Endothelial cell of umbilical vein (primary cell): ENCODE measurements at regions of chr10 and their contacts with region 1.

Region 1: DNA sequence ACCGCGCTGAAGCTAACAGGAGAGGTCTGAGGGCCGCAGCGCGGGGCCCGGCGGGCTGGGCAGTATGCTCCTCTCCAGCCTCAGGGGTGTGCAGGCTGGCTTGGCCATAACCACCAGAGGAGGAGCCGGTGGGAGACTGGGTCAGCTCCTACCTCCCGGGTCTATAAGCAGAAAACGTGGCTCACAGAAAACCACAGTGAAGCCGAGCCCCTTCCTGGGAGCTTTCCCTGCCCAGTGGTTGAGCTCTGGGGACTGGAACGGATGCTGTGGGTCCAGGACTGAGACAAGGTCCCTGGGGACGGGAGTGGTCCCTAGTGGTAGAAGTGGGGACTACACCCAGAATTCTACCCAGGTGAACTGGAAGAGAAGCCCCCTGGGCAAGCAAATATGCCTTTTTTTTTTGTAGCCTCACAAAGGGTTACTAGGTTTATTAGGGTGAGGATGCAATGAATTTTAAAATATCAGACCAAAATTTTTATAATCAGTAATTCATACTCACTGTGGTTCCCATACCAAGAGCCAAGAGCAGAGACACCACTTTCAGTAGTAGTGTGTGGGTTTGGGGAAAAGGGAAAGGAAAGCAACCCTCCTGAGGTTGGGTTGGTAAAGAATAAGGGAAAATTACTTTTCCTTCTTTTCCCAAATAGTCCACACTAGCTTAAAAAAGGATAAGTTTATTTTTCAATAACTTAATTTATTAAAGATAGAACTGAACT is 67.9 kb upstream of the PRKCQ start:
- DNase-seq: peak; percentile 15
- H3K4me3 ChIP-seq: no peak overlapping the region
- H3K27ac ChIP-seq: no peak overlapping the region
- H3K4me1 ChIP-seq: no peaks in the 10 kb centered on the region
- H3K27me3 ChIP-seq: no peaks in the 10 kb centered on the region
- CTCF ChIP-seq: peak; percentile 48 to 73
- POLR2A ChIP-seq: no peak

Region 2: GRCh38 chr10:6445501-6446316 is 202.3 kb before region 1 on chr10:
- CTCF ChIA-PET with region 1: interaction called, 4 read pairs
- POLR2A ChIA-PET with region 1: no interaction called
- dilution Hi-C with region 1: no loop called
- intact Hi-C with region 1: loop called (anchors 1 kb)
- DNase-seq: peak; percentile 41
- H3K4me3 ChIP-seq: no peak overlapping the region
- H3K27ac ChIP-seq: no peak overlapping the region
- H3K4me1 ChIP-seq: no peaks in the 10 kb centered on the region
- H3K27me3 ChIP-seq: no peaks in the 10 kb centered on the region
- CTCF ChIP-seq: peak; percentile 41 to 47
- POLR2A ChIP-seq: no peak

Region 3: DNA sequence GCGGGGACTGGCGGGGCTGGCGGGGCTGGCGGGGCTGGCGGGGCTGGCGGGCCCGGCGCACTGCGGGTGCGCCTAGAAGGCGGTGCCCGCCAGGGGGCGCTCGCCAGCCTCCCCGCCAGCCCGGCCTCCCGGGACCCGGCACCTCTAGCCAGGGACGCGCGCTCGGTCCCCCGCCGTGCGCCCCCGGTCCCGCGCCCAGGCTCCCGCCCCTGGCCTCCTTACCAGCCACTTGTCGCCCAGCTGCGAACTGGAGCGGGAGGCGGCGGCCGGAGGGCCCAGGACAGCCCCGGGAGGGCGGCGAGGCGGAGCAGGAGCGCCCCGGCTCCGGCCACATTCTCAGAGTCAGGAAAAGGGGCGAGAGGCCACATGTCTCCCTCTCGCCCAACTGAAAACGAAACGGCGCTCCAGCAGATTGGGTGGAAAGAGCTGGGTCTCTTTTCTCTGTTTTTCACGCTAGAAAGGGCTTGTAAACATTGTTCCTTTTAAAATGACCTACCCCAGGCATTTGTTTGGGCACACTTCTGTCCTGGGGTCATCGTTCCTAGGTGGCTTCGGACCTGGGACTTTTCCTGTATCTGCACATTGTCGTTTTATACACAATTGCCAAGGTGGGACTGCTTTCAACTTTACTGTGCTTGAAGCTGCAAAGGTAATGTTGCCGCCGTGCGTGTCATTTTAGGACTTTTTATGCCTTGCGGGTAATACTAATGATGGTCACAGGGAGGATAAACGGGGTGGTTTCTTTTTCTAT is 67.5 kb before region 1 on chr10:
- CTCF ChIA-PET with region 1: interaction called, 4 read pairs
- POLR2A ChIA-PET with region 1: no interaction called
- dilution Hi-C with region 1: no loop called
- intact Hi-C with region 1: loop called (anchors 2 kb)
- DNase-seq: peak; percentile 68
- H3K4me3 ChIP-seq: peak overlapping the region; percentile 75 to 92 (median 92)
- H3K27ac ChIP-seq: peak overlapping the region; percentile 60
- H3K4me1 ChIP-seq: peaks cover 10% of the 10 kb centered on the region
- H3K27me3 ChIP-seq: peaks cover 14 to 30% of the 10 kb centered on the region in 2 experiments
- CTCF ChIP-seq: peak; percentile 58
- POLR2A ChIP-seq: peak; percentile 28

Region 4: GRCh38 chr10:6674291-6674690 is 26.3 kb after region 1 on chr10:
- CTCF ChIA-PET with region 1: no interaction called
- POLR2A ChIA-PET with region 1: no interaction called
- dilution Hi-C with region 1: no loop called
- intact Hi-C with region 1: no loop called
- DNase-seq: peak; percentile 10
- H3K4me3 ChIP-seq: no peak overlapping the region
- H3K27ac ChIP-seq: no peak overlapping the region
- H3K4me1 ChIP-seq: peaks cover 11% of the 10 kb centered on the region
- H3K27me3 ChIP-seq: peaks cover 0 to 5% of the 10 kb centered on the region in 2 experiments
- CTCF ChIP-seq: no peak
- POLR2A ChIP-seq: no peak